ENCODE measurements at regions of chr2 and their contacts with region 1.

Region 1: GRCh38 chr2:55961318-55961911 is 37.8 kb upstream of the EFEMP1 start:
- DNase-seq: peak; percentile 55
- H3K4me3 ChIP-seq: no peak overlapping the region
- H3K27ac ChIP-seq: no peak overlapping the region
- H3K4me1 ChIP-seq: peaks cover 20% of the 10 kb centered on the region
- H3K27me3 ChIP-seq: no peaks in the 10 kb centered on the region
- CTCF ChIP-seq: peak; percentile 54 to 74

Region 2: GRCh38 chr2:55718165-55719008 is 243.0 kb before region 1 on chr2:
- CTCF ChIA-PET with region 1: interaction called, 3 read pairs
- dilution Hi-C with region 1: no loop called
- in situ Hi-C with region 1: no loop called
- intact Hi-C with region 1: loop called (anchors 1 kb)
- DNase-seq: peak; percentile 52
- H3K4me3 ChIP-seq: no peak overlapping the region
- H3K27ac ChIP-seq: no peak overlapping the region
- H3K4me1 ChIP-seq: peaks cover 16% of the 10 kb centered on the region
- H3K27me3 ChIP-seq: no peaks in the 10 kb centered on the region
- CTCF ChIP-seq: peak; percentile 72 to 80

Region 3: DNA sequence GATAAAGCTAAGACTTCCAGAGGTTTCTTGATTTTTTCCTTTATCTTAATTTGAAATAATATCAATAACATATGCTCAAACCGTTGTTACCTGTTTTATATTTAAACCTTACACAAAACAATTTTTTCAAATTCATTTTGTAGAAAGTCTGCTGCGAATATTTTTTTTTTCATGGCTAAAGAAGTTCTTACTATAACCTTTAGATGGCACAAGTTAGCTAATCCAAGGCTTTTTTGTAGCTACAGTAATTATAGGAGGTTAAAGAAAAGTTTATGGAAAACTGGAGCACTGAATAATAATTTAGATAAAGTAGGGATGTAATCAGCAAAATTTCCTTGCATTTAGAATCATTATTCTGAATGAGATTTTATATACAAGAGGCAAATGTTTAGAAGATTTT is 189.8 kb before region 1 on chr2:
- CTCF ChIA-PET with region 1: interaction called, 9 read pairs
- dilution Hi-C with region 1: no loop called
- in situ Hi-C with region 1: loop called (anchors 10 to 25 kb)
- intact Hi-C with region 1: loop called (anchors 1 kb)
- DNase-seq: peak; percentile 35
- H3K4me3 ChIP-seq: no peak overlapping the region
- H3K27ac ChIP-seq: no peak overlapping the region
- H3K4me1 ChIP-seq: peaks cover 18% of the 10 kb centered on the region
- H3K27me3 ChIP-seq: no peaks in the 10 kb centered on the region
- CTCF ChIP-seq: peak; percentile 50 to 71

Region 4: DNA sequence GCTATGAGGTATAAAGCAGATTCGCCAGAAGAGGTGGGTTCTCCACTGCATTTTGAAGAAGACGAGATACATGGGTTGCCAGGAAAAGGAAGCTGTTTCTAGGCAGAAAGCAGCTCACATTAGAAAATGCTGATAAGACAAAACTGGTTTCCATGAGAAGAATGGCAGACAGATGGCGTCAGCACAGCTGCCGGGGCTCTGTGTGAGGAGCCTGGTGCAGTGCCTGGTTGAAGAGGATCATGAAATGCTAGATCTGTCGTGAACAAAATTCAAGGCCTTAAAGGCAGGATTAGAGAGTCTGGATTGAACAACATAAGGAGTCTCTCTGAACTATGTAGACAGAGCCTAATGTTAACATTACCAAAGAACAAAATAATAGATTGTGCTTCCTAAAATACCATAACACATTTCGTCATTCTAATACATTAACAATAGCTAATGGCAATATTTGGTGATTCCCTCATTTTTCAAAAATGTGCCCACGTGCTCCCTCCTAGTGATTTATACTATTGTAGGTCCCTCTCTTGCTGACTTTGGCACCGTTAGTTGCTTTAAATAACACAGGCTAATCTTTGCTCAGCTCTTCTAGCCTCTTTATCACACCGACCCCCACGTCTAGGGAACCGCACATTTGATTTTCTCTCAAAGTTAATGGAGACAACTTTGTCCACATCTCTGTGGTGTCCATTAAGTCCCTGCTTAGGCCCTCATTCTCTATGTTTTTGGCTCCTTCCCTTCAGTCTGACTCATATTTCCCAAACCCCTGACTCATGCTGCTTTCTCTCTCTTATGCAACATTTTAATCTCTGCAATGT is 76.1 kb before region 1 on chr2:
- CTCF ChIA-PET with region 1: no interaction called
- dilution Hi-C with region 1: no loop called
- in situ Hi-C with region 1: no loop called
- intact Hi-C with region 1: loop called (anchors 1 kb)
- DNase-seq: peak; percentile 90
- H3K4me3 ChIP-seq: no peak overlapping the region
- H3K27ac ChIP-seq: peak overlapping the region; percentile 80
- H3K4me1 ChIP-seq: peaks cover 48% of the 10 kb centered on the region
- H3K27me3 ChIP-seq: no peaks in the 10 kb centered on the region
- CTCF ChIP-seq: no peak

Region 5: GRCh38 chr2:56132138-56132537 is 170.7 kb after region 1 on chr2:
- CTCF ChIA-PET with region 1: interaction called, 11 read pairs
- dilution Hi-C with region 1: no loop called
- in situ Hi-C with region 1: no loop called
- intact Hi-C with region 1: no loop called
- DNase-seq: peak; percentile 17
- H3K4me3 ChIP-seq: no peak overlapping the region
- H3K27ac ChIP-seq: no peak overlapping the region
- H3K4me1 ChIP-seq: no peaks in the 10 kb centered on the region
- H3K27me3 ChIP-seq: peaks cover 4% of the 10 kb centered on the region
- CTCF ChIP-seq: peak; percentile 42 to 57

Region 6: DNA sequence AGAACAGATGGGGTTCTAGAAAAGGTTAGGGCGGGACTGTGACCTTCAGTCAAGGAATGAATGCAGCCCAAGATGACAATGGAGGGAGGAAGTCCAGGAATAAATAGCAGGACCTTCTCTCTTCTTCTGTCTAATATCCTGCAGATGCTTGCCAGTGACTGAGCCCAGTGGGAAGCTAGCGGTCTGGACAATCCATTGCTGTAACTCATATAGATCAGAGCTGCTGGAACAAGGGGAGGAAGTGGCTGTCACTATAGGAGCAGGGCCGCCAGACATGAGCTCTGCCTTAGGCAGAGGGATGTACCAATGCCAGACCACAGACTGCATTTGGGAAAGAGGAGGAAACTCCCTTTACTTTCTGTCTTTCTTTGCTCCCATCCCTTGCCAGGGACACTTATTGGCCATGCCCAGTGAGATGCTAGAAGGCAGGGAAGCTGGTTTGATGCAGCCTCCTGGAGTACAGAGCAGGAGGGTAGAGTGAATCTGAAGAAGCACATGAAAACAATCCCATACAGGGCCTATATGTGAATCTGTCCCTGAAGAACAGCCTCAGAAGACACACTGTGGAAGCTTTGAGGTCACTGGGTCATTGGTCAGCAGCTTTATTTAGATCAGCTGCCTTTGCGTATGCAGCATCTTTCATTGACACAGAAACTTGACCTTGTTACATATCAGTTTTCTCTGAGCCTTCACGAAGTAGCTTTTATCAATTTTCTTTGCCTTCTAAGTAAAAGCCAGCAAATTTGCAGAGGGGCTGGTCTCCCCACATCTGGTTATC is 287.7 kb after region 1 on chr2:
- CTCF ChIA-PET with region 1: no interaction called
- dilution Hi-C with region 1: no loop called
- in situ Hi-C with region 1: no loop called
- intact Hi-C with region 1: no loop called
- DNase-seq: no peak
- H3K4me3 ChIP-seq: no peak overlapping the region
- H3K27ac ChIP-seq: no peak overlapping the region
- H3K4me1 ChIP-seq: peaks cover 8% of the 10 kb centered on the region
- H3K27me3 ChIP-seq: no peaks in the 10 kb centered on the region
- CTCF ChIP-seq: no peak